Sigmoid colon (tissue), 7 donors: ENCODE measurements at regions of chr22 and their contacts with region 1.

Region 1: DNA sequence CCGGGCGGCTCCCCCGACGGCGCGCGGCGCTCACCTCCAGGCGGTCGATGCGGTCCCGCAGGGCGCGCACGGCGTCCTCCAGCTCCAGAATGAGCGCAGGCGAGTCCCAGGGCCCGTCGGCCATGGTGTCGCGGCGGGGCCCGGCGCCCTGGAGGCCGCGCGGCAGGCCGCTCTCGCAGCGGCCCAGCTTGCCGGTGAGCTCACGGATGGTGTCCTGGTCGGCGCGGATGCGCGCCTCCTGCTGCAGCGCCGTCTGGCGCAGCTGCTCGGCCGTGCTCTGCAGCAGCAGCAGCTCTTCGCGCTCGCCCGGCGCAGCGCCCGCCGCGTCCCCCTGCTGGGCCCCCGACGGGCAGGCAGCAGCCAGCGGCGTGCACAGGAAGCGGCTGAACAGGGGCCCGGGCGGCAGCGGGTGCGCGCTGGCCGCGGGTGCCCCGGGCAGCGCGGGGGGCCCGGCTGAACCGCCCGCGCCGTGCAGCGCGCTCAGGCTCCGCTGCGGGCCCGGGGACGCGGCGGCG is 570 bp downstream of the NPTXR start:
- DNase-seq: peak; percentile 79
- H3K4me3 ChIP-seq: peak overlapping the region; percentile 31 to 56 (median 55)
- H3K27ac ChIP-seq: peak overlapping the region; percentile 75 to 83 (median 82)
- H3K4me1 ChIP-seq: peaks cover 0 to 20% (median 17%) of the 10 kb centered on the region in 4 donors
- H3K27me3 ChIP-seq: no peaks in the 10 kb centered on the region
- CTCF ChIP-seq: peak in 1 of 4 experiments; percentile 42
- EP300 ChIP-seq: no peak
- POLR2A ChIP-seq: no peak

Region 2: DNA sequence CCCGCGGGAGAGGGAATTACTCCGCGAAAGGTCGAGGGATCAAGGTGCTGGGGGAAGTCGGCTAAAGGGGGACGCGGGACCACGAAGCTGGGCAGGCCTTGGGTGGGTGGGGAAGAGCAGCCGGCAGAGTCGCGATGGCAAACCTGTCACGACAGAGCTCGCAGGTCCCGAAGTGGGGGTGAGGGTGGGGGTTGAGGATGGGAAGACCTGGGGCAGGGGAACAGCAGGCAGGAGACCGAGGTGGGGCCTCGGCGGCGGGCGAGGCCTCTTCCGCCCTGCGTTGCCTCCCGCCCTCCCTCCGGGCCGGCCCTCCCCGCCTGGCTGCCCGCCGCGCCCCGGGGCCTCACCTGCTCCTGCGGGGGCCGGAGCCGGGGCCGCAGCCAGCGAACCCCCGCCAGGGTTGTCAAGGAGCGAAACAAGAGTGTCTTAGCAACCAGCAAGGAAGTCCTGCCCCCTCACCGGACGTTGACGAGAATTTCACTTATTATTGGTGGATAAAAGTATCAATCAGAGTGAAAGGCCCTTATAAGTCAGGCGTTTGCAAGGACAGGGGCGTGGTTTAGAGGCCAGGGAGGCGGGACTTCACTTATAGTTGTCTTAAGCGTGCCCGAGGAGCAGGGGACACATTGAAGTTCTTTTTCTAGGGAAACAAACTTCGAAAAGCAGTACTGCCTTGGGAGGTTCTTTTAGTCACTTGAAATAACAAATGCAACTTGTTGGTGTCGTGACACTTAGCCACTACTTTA is 49.4 kb before region 1 on chr22 and contains the start of gene DNAL4:
- intact Hi-C with region 1: loop called (anchors 5 kb)
- DNase-seq: peak; percentile 99
- H3K4me3 ChIP-seq: peak within 1 kb of the TSS; percentile 61 to 94 (median 85)
- H3K27ac ChIP-seq: peak within 1 kb of the TSS; percentile 82 to 90 (median 84)
- H3K4me1 ChIP-seq: peaks cover 0 to 15% (median 15%) of the 10 kb centered on the region in 4 donors
- H3K27me3 ChIP-seq: no peaks in the 10 kb centered on the region
- CTCF ChIP-seq: no peak
- EP300 ChIP-seq: no peak
- POLR2A ChIP-seq: no peak
- total RNA-seq, gene DNAL4: 7.9 to 15.0 (median 11.5) TPM

Region 3: GRCh38 chr22:38862375-38863329 is 19.4 kb after region 1 on chr22:
- intact Hi-C with region 1: no loop called
- DNase-seq: peak; percentile 87
- H3K4me3 ChIP-seq: no peak overlapping the region
- H3K27ac ChIP-seq: peak overlapping the region; percentile 52 to 81 (median 66)
- H3K4me1 ChIP-seq: peaks cover 0 to 67% (median 61%) of the 10 kb centered on the region in 4 donors
- H3K27me3 ChIP-seq: no peaks in the 10 kb centered on the region
- CTCF ChIP-seq: no peak
- EP300 ChIP-seq: no peak
- POLR2A ChIP-seq: no peak